Dendritic cell treated with granulocyte-macrophage colony-stimulating factor and Interleukin-4, amounts not matched to agents 40 ng/mL and 50 ng/mL, for 4 days (primary cell): ENCODE measurements at regions of chr1 and their contacts with region 1.

Region 1: GRCh38 chr1:212514056-212514614 is 81.4 kb downstream of the NENF start:
- H3K4me3 Mint-ChIP-seq: no peak overlapping the region
- H3K27ac Mint-ChIP-seq: peak overlapping the region; percentile 64
- H3K4me1 Mint-ChIP-seq: peaks cover 22% of the 10 kb centered on the region
- H3K27me3 Mint-ChIP-seq: peaks cover 76% of the 10 kb centered on the region

Region 2: DNA sequence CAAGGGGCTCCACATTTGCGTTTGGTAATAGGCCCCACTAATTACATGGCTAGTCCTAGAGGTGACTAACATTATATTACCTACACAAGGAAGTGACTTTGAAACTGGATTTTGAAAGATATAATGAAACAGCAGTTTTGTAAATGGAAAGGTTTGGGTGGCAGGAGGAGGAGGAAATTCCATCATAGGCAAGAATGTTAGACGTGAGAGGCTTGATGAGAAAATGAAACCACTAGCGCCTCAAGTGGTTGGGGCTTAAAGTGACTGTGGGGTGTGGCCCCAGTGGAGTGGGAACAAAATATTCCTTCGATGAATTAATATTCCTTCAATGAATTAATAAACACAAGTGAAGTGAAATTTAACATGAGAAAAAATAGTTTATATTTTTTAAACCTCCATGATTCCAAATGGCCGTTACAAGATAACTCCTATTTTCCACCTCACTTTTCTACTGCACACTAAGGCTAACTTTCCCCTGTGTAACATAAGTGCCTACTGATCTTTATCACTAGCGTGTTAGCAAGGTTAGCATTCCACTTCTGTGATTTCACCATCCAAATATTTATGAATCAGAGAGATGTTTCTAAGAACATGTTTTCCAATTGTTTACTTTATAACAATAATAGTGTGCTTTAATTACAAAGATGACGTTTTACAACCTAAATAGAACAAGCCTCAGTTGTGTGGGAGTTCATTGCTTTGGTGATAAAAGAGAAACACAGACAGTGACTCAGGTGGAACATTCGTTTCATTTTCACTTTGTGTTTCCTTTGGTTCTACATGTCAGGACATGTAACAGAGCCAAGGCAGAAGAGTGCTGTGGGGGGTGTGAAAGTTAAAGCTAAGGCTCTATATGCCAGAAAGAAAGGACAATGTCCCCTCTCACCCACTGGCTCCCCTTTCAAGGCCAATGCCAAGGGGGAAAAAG is 81.9 kb after region 1 on chr1:
- intact Hi-C with region 1: loop called (anchors 10 kb)
- H3K4me3 Mint-ChIP-seq: no peak overlapping the region
- H3K27ac Mint-ChIP-seq: no peak overlapping the region
- H3K4me1 Mint-ChIP-seq: peaks cover 13% of the 10 kb centered on the region
- H3K27me3 Mint-ChIP-seq: peaks cover 29% of the 10 kb centered on the region